SK-N-SH (cell line): ENCODE measurements at regions of chr6 and their contacts with region 1.

Region 1: DNA sequence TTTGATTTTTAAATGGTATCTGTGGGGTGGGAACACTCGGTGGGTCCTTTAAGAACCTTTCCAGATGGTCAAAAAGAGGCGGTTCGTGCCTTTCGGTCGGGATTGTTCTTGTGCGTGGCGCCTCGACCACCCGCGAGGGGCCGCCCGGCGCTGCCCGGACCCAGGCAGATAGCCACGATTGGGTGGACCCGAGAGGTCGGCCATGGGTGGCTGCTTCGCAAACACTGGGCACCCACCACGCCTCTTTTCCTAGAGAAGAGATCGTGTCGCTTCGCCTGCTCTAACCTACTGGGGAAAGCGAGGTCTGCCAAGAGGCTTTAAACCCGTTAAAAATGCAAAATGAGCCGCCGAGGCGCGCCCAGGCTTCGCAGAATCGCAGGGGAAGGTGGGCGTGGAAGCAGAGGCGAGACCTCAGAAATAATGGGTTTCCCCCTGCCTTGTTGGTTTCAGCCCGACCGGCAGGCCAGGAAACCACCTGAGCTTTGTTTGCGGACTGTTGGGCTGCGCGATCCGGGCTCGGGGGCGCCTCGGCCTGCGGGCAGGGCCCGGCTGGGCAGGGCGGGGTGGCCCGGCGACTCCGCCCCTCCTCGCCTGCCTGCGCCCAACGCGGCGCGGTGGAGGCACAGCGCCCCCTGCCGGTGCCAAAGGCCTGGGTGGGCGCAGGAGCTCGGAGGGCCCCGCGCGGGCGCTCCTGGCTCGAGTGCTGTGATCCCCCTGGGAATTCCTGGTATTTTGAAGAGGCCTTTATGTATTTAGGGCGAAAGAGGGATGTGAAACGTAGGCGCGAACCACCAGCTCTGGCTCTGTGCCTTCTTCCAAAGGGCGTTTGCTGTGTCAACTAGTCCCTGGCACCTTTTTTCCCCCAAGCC is 1.6 kb downstream of the MARCKS start:
- DNase-seq: peak; percentile 95
- H3K4me3 ChIP-seq: peak overlapping the region; percentile 99 to 100
- H3K27ac ChIP-seq: peak overlapping the region; percentile 99
- H3K4me1 ChIP-seq: peaks cover 8 to 22% of the 10 kb centered on the region in 2 experiments
- H3K27me3 ChIP-seq: no peaks in the 10 kb centered on the region
- CTCF ChIP-seq: peak; percentile 87
- EP300 ChIP-seq: peak in 1 of 2 experiments; percentile 38; a peak in 1 of 4 replicates
- RAD21 ChIP-seq: peak; percentile 85

Region 2: DNA sequence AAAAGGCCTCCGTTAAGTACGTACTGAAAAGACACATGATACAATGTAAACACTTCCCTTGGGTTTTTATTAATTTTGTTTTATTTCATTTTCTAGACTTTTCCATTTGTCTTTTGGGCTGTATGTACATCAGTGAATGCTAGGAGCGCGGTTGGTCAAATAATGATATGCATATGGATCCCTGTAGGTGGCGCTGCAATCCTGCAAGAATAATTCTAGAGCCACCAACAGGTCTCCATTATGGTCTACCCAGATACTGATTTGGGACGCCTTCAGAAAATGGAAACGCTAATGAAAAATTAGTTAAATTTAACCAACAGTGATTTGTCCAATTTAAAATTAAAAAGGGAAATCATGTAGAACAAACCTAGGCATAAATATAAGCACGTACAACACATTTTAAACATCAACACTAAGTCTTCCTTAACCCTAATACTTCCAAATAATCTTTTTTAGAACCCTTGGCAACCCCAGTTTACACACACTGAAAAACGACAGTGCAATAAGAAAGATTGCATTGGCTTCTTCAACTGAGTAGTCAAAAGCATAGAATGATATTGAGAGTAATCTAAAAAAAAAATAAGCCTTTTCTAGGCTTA is 1078.1 kb before region 1 on chr6:
- CTCF ChIA-PET with region 1: interaction called, 23 read pairs
- POLR2A ChIA-PET with region 1: interaction called, 3 read pairs
- DNase-seq: peak; percentile 50
- H3K4me3 ChIP-seq: no peak overlapping the region; a peak in 1 of 4 replicates
- H3K27ac ChIP-seq: peak overlapping the region in 1 of 2 experiments; percentile 17; a peak in 1 of 4 replicates
- H3K4me1 ChIP-seq: no peaks in the 10 kb centered on the region; a peak in 1 of 4 replicates
- H3K27me3 ChIP-seq: no peaks in the 10 kb centered on the region
- CTCF ChIP-seq: peak; percentile 89
- EP300 ChIP-seq: no peak
- RAD21 ChIP-seq: peak; percentile 94

Region 3: DNA sequence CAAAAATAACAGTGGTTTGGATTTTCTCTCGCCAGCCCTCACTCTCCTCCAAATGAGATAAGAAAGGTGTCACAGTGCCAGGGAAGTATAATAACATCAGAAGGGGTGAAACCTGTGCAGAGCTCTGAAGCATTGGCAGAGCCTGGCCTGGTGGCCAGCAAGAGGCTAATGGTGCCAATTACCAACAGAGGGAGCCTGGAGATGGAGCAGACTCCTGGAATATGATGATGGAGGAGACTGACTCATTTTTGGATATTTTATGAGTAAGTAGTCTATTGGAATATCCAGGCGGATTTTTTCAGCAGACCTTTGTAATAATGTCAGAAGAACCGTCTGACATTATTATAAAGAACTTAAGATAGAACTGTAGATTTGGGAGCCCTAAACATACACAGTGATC is 444.2 kb before region 1 on chr6:
- CTCF ChIA-PET with region 1: interaction called, 15 read pairs
- POLR2A ChIA-PET with region 1: interaction called, 3 read pairs
- DNase-seq: peak; percentile 26
- H3K4me3 ChIP-seq: no peak overlapping the region
- H3K27ac ChIP-seq: peak overlapping the region; percentile 17 to 85; a peak in 3 of 4 replicates
- H3K4me1 ChIP-seq: peaks cover 10 to 29% of the 10 kb centered on the region in 2 experiments
- H3K27me3 ChIP-seq: no peaks in the 10 kb centered on the region
- CTCF ChIP-seq: peak; percentile 75
- EP300 ChIP-seq: peak; percentile 15 to 25; a peak in 1 of 4 replicates
- RAD21 ChIP-seq: peak; percentile 74

Region 4: DNA sequence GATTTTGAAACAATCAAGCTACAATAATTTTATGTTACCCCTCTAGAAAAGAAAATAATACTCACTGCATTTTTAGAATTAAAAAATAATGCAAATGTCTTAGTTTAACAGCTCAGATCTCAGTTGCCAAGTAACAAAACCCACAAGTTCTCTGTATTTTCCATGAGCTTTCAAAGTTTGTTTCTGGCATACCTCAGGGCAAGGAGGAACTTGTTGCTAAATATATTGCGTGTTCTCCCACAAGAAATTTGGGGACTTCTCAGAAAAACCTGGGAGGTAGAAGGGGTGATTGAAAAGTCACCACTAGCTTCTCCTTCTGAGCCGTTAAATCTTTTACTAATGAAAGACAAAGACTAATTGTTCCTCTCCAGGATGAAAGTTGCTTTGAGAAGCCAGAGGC is 238.3 kb before region 1 on chr6:
- CTCF ChIA-PET with region 1: interaction called, 13 read pairs
- POLR2A ChIA-PET with region 1: no interaction called
- DNase-seq: no peak
- H3K4me3 ChIP-seq: no peak overlapping the region
- H3K27ac ChIP-seq: no peak overlapping the region
- H3K4me1 ChIP-seq: peaks cover 4% of the 10 kb centered on the region in 2 experiments; a peak in 2 of 4 replicates
- H3K27me3 ChIP-seq: no peaks in the 10 kb centered on the region
- CTCF ChIP-seq: no peak
- EP300 ChIP-seq: no peak
- RAD21 ChIP-seq: no peak

Region 5: GRCh38 chr6:113879186-113880096 is 20.7 kb after region 1 on chr6:
- CTCF ChIA-PET with region 1: interaction called, 35 read pairs
- POLR2A ChIA-PET with region 1: no interaction called
- DNase-seq: peak; percentile 56
- H3K4me3 ChIP-seq: no peak overlapping the region; a peak in 1 of 4 replicates
- H3K27ac ChIP-seq: peak overlapping the region; percentile 63 to 78; a peak in 3 of 4 replicates
- H3K4me1 ChIP-seq: peaks cover 0 to 5% of the 10 kb centered on the region in 2 experiments; a peak in 2 of 4 replicates
- H3K27me3 ChIP-seq: no peaks in the 10 kb centered on the region
- CTCF ChIP-seq: peak; percentile 89
- EP300 ChIP-seq: no peak
- RAD21 ChIP-seq: peak; percentile 96